CD8-positive, alpha-beta memory T cell (primary cell): ENCODE measurements at regions of chr12 and their contacts with region 1.

Region 1: GRCh38 chr12:109597795-109598427 is 24.3 kb downstream of the MVK start:
- DNase-seq: peak; percentile 43 to 72 (median 50)
- H3K4me3 ChIP-seq: no peak overlapping the region
- H3K4me3 Mint-ChIP-seq: peak overlapping the region in 1 of 7 donors; percentile 20
- H3K27ac ChIP-seq: no peak overlapping the region
- H3K27ac Mint-ChIP-seq: peak overlapping the region in 2 of 8 donors; percentile 41 to 52
- H3K4me1 ChIP-seq: peaks cover 11% of the 10 kb centered on the region
- H3K4me1 Mint-ChIP-seq: peaks cover 21 to 30% (median 28%) of the 10 kb centered on the region in 3 donors
- H3K27me3 ChIP-seq: no peaks in the 10 kb centered on the region
- H3K27me3 Mint-ChIP-seq: peaks cover 0 to 1% of the 10 kb centered on the region in 2 donors

Region 2: GRCh38 chr12:109440851-109441493 is 156.9 kb before region 1 on chr12:
- CTCF ChIA-PET with region 1: no interaction called
- POLR2A ChIA-PET with region 1: no interaction called
- DNase-seq: no peak
- H3K4me3 ChIP-seq: no peak overlapping the region
- H3K4me3 Mint-ChIP-seq: no peak overlapping the region
- H3K27ac ChIP-seq: no peak overlapping the region
- H3K27ac Mint-ChIP-seq: peak overlapping the region in 2 of 8 donors; percentile 3 to 38
- H3K4me1 ChIP-seq: no peaks in the 10 kb centered on the region
- H3K4me1 Mint-ChIP-seq: no peaks in the 10 kb centered on the region
- H3K27me3 ChIP-seq: no peaks in the 10 kb centered on the region
- H3K27me3 Mint-ChIP-seq: no peaks in the 10 kb centered on the region

Region 3: GRCh38 chr12:109553483-109553882 is 44.4 kb before region 1 on chr12:
- CTCF ChIA-PET with region 1: no interaction called
- POLR2A ChIA-PET with region 1: no interaction called
- DNase-seq: no peak
- H3K4me3 ChIP-seq: no peak overlapping the region
- H3K4me3 Mint-ChIP-seq: no peak overlapping the region
- H3K27ac ChIP-seq: no peak overlapping the region
- H3K27ac Mint-ChIP-seq: peak overlapping the region in 2 of 8 donors; percentile 66 to 68
- H3K4me1 ChIP-seq: no peaks in the 10 kb centered on the region
- H3K4me1 Mint-ChIP-seq: peaks cover 0 to 7% (median 0%) of the 10 kb centered on the region in 3 donors
- H3K27me3 ChIP-seq: no peaks in the 10 kb centered on the region
- H3K27me3 Mint-ChIP-seq: peaks cover 5 to 13% of the 10 kb centered on the region in 2 donors

Region 4: DNA sequence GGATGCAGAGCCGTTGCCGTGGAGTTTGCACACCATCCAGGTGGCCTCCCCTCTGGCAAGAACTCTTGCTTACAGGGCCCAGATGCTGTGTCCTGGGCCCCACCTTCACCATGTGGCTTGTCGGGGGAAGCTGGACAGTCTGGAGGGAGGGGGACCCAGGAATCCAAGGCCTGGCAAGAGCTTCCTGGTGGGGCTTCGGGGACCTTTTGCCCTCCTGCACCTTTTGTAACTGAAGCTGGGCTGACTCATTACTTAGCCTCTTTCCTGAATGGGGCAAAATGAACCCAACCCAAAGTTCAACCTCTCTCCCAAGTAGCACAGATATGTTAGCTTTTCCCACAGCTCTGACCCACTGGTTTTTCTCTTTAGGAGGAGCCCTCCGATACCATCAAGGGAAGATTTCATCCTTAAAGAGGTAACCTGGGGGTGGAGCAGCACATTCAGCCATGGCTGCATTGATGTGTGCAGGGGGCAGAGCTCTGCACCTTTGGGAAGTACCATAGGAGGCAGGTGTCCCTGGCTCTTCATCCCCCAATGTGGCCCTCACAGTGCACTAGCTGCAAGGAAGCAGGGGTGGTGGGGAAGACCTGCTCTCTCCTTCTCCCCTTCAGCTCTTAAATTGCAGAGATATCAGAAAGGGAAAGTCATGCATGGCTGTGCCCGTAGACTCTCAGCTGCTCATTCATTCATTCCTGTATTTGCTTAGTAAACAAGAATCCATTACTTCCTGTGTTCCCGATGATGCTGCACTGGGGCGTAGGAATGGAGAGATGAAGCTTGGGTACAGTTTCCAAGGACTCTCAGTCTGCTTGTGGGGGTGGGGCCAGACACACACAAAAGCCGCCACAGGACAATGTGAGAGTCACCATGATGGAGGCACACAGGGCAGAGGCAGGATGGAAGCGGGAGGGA is 11.3 kb before region 1 on chr12:
- CTCF ChIA-PET with region 1: interaction called, 18 read pairs
- POLR2A ChIA-PET with region 1: no interaction called
- DNase-seq: no peak
- H3K4me3 ChIP-seq: no peak overlapping the region
- H3K4me3 Mint-ChIP-seq: no peak overlapping the region
- H3K27ac ChIP-seq: no peak overlapping the region
- H3K27ac Mint-ChIP-seq: no peak overlapping the region
- H3K4me1 ChIP-seq: no peaks in the 10 kb centered on the region
- H3K4me1 Mint-ChIP-seq: no peaks in the 10 kb centered on the region
- H3K27me3 ChIP-seq: no peaks in the 10 kb centered on the region
- H3K27me3 Mint-ChIP-seq: no peaks in the 10 kb centered on the region

Region 5: GRCh38 chr12:109739747-109740693 is 142.1 kb after region 1 on chr12:
- CTCF ChIA-PET with region 1: interaction called, 10 read pairs
- POLR2A ChIA-PET with region 1: no interaction called
- DNase-seq: peak in 1 of 5 donors; percentile 35
- H3K4me3 ChIP-seq: no peak overlapping the region
- H3K4me3 Mint-ChIP-seq: no peak overlapping the region
- H3K27ac ChIP-seq: no peak overlapping the region
- H3K27ac Mint-ChIP-seq: peak overlapping the region in 1 of 8 donors; percentile 56
- H3K4me1 ChIP-seq: no peaks in the 10 kb centered on the region
- H3K4me1 Mint-ChIP-seq: no peaks in the 10 kb centered on the region
- H3K27me3 ChIP-seq: peaks cover 4% of the 10 kb centered on the region
- H3K27me3 Mint-ChIP-seq: peaks cover 13 to 15% of the 10 kb centered on the region in 2 donors

Region 6: DNA sequence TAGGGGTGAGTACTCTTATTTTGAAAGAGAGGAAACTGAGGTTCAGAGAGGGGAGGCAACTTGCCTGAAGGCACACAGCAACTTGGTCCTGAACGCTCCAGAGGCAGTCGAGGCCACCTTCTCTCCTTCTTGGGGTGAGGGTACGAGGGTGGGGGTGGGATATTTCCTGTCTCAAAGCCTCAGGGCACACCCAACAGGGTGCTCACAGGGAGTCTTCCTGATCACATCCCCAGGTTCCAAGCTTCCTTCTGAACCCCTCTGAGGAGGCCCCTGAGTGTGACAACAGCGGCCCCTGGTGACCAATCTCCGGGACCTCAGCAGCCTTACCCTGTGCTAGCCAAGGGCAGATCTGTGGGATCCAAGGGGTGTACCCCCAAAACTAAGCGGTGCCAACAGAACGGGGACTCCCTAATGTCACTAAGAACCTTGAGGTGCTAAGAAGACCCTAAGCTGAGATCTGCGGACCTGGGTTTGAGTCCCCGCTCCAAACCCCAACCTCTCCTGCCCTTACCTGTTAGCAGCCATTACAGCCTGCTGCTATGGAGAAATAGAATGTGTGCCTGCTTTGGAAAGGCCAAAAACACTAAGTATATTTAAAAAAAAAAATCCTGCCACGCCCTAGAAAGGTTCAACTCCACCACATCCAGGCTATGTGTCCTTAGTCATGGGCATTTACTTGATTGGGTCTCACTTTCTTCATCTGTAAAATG is 177.4 kb after region 1 on chr12:
- CTCF ChIA-PET with region 1: interaction called, 51 read pairs
- POLR2A ChIA-PET with region 1: no interaction called
- DNase-seq: peak; percentile 49 to 78 (median 63)
- H3K4me3 ChIP-seq: no peak overlapping the region
- H3K4me3 Mint-ChIP-seq: peak overlapping the region in 1 of 7 donors; percentile 44
- H3K27ac ChIP-seq: no peak overlapping the region
- H3K27ac Mint-ChIP-seq: peak overlapping the region in 1 of 8 donors; percentile 54
- H3K4me1 ChIP-seq: no peaks in the 10 kb centered on the region
- H3K4me1 Mint-ChIP-seq: peaks cover 6 to 16% (median 6%) of the 10 kb centered on the region in 3 donors
- H3K27me3 ChIP-seq: no peaks in the 10 kb centered on the region
- H3K27me3 Mint-ChIP-seq: peaks cover 4 to 11% of the 10 kb centered on the region in 2 donors